ENCODE measurements at regions of chr15 and their contacts with region 1.

Region 1: DNA sequence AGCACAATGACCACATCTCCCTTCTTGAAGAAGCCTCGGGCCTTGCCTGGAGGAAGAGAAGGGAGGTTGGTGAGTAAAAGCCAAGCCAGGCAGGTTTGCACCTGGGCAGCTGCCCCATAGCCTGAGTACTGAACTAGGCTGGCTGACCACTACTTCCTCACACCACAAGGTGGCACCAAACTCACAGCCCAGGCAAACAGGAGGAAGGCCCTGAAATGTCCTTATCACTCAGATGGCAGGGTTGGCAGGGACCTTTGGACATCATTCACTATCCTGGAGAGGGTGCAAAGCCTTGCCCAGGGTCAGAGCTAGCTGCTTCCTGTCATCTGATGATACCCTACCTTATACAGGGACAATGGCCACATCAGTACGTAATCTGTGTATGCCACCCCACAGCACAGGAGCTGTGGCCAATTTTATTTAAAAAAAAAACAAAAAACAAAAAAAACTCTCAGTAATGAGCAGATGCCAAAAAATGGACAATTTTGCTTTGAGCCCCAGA is 2.2 kb upstream of the GRAMD2A start:
- DNase-seq: peak; percentile 54 to 76 (median 67)
- ATAC-seq: peak; percentile 83
- H3K4me3 ChIP-seq: no peak overlapping the region
- H3K4me3 Mint-ChIP-seq: no peak overlapping the region
- H3K27ac ChIP-seq: no peak overlapping the region
- H3K27ac Mint-ChIP-seq: peak overlapping the region in 1 of 9 donors; percentile 56
- H3K4me1 ChIP-seq: no peaks in the 10 kb centered on the region
- H3K4me1 Mint-ChIP-seq: peaks cover 4 to 31% (median 8%) of the 10 kb centered on the region in 7 donors
- H3K27me3 ChIP-seq: no peaks in the 10 kb centered on the region
- H3K27me3 Mint-ChIP-seq: peaks cover 13 to 22% (median 19%) of the 10 kb centered on the region in 5 donors

Region 2: DNA sequence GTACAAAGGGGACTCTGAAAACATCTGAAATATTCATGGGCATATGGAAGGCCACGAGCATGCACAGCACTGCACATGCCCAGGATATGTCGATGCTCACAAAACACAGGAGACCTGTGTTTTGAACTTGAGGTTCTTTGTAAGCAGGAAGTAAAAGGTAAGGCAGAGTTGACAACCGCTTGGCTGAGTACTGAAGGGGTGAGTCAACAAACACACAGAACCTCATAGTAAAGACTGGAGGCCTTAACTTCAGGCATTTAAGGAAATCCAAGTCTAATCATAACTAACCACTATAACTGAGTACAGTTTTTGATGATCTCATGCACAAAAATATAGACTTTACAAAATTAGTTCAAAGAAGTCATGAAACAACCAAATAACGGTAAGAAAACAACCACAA is 162.4 kb before region 1 on chr15:
- CTCF ChIA-PET with region 1: no interaction called
- POLR2A ChIA-PET with region 1: no interaction called
- intact Hi-C with region 1: no loop called
- DNase-seq: no peak
- ATAC-seq: no peak
- H3K4me3 ChIP-seq: no peak overlapping the region
- H3K4me3 Mint-ChIP-seq: peak overlapping the region in 1 of 10 donors; percentile 45
- H3K27ac ChIP-seq: no peak overlapping the region
- H3K27ac Mint-ChIP-seq: peak overlapping the region in 1 of 9 donors; percentile 25
- H3K4me1 ChIP-seq: no peaks in the 10 kb centered on the region
- H3K4me1 Mint-ChIP-seq: peaks cover 6 to 34% (median 22%) of the 10 kb centered on the region in 7 donors
- H3K27me3 ChIP-seq: no peaks in the 10 kb centered on the region
- H3K27me3 Mint-ChIP-seq: no peaks in the 10 kb centered on the region

Region 3: DNA sequence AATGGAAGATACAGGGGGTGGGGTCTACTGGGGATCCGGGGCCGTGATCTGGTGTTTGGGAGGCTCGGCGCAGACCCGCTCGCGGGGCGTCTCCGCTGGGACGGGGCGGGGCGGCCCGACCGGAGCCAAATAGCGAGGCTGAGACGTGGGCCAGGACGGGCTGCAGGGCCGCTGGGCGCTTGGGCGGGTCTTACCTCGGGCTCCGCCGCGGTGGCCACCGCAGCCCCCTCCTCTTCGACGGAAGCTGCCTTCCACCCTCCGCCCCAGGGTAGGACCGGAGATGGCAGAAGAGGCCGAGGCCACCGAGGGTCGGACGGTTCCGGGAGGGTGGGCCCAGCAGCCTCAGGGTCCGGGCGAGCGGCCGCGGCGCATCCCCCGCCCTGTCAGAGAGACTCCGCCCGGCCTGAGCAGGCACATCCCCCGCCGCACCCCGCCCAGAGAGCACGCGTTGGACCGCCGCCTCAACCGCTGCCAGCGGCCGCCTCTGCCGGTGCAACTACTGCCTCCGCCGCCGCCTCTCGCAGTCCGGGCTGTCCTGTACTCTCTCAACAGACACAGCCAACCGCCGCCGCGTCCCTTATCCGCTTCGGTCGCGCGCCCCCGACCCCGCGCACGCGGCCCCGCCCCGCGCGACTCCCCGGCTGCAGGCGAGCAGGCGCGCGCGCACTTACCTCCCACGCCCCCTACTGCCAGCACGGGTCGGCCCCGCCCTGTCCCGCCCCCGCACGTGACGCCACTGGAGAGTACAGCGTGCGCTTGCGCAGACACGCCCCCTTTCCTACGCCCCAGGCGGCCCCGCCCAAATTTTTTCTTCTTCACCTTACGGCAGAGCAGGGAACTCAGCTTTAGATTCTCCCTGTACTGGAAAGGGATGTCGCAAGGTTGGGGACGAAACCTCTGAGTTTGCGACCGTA is 82.0 kb before region 1 on chr15 and contains the start of gene MYO9A:
- CTCF ChIA-PET with region 1: no interaction called
- POLR2A ChIA-PET with region 1: no interaction called
- intact Hi-C with region 1: loop called in 1 of 2 experiments (anchors 10 kb)
- DNase-seq: peak; percentile 93 to 99 (median 98)
- ATAC-seq: peak; percentile 90
- H3K4me3 ChIP-seq: peak within 1 kb of the TSS; percentile 86
- H3K4me3 Mint-ChIP-seq: peak within 1 kb of the TSS; percentile 89 to 99 (median 97)
- H3K27ac ChIP-seq: peak within 1 kb of the TSS; percentile 94
- H3K27ac Mint-ChIP-seq: peak within 1 kb of the TSS; percentile 81 to 99 (median 99)
- H3K4me1 ChIP-seq: peaks cover 7 to 11% of the 10 kb centered on the region in 2 donors
- H3K4me1 Mint-ChIP-seq: peaks cover 23 to 55% (median 47%) of the 10 kb centered on the region in 7 donors
- H3K27me3 ChIP-seq: no peaks in the 10 kb centered on the region
- H3K27me3 Mint-ChIP-seq: peaks cover 0 to 23% (median 0%) of the 10 kb centered on the region in 5 donors
- total RNA-seq, gene MYO9A: 21.6 to 53.3 (median 29.7) TPM

Region 4: DNA sequence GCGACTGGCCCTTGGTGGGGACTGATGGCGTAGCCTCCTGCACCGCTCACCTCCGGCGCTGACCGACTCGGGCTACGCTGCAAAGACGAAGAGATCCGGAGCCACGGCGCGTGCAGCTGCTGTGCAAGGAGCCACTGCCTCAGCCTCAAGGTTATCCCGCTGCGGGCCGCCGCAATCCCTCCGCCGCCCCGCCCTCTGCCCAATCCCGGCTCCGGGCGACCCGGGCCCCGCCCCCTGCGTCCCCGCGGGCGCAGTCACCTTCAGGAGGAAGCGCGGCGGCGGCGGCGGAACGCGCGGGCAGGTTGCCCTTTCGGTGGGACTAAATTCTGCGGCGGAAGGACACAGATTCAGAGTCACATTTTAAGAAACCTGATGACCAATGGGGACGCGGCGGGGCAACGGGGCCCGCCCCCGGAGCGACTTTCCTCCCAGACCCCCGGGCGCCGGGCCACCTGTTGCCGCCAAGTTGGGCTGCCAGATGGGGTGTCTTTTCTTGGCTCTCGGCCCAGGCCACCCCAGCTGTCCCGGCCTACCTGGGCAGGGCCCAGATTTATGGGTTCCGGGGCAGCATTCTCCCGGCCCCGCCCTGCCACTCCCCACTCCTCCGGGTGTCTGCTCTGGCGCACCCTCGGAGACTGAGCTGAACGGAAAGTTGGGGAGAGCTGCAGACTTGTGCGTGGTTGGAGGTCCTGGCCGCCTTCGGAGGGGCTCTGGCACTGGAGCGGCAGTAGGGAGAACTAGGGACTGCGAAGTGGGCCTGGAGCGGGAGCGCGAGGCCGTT is 31.5 kb after region 1 on chr15 and contains the start of gene PKM:
- CTCF ChIA-PET with region 1: interaction called, 19 read pairs
- POLR2A ChIA-PET with region 1: interaction called, 11 read pairs
- intact Hi-C with region 1: loop called (anchors 1 kb)
- DNase-seq: peak; percentile 82 to 99 (median 88)
- ATAC-seq: peak; percentile 65
- H3K4me3 ChIP-seq: peak within 1 kb of the TSS; percentile 73
- H3K4me3 Mint-ChIP-seq: peak within 1 kb of the TSS; percentile 95 to 100 (median 99)
- H3K27ac ChIP-seq: peak within 1 kb of the TSS; percentile 73
- H3K27ac Mint-ChIP-seq: peak within 1 kb of the TSS; percentile 89 to 99 (median 95)
- H3K4me1 ChIP-seq: peaks cover 34 to 39% of the 10 kb centered on the region in 2 donors
- H3K4me1 Mint-ChIP-seq: peaks cover 40 to 55% (median 50%) of the 10 kb centered on the region in 7 donors
- H3K27me3 ChIP-seq: no peaks in the 10 kb centered on the region
- H3K27me3 Mint-ChIP-seq: peaks cover 0 to 3% (median 0%) of the 10 kb centered on the region in 5 donors
- total RNA-seq, gene PKM: 237 to 1,627 (median 329) TPM

Region 5: GRCh38 chr15:72252663-72253299 is 53.0 kb after region 1 on chr15:
- CTCF ChIA-PET with region 1: no interaction called
- POLR2A ChIA-PET with region 1: no interaction called
- intact Hi-C with region 1: loop called in 1 of 2 experiments (anchors 5 kb)
- DNase-seq: no peak
- ATAC-seq: no peak
- H3K4me3 ChIP-seq: no peak overlapping the region
- H3K4me3 Mint-ChIP-seq: no peak overlapping the region
- H3K27ac ChIP-seq: no peak overlapping the region
- H3K27ac Mint-ChIP-seq: no peak overlapping the region
- H3K4me1 ChIP-seq: no peaks in the 10 kb centered on the region
- H3K4me1 Mint-ChIP-seq: peaks cover 0 to 7% (median 0%) of the 10 kb centered on the region in 7 donors
- H3K27me3 ChIP-seq: no peaks in the 10 kb centered on the region
- H3K27me3 Mint-ChIP-seq: no peaks in the 10 kb centered on the region

Region 6: DNA sequence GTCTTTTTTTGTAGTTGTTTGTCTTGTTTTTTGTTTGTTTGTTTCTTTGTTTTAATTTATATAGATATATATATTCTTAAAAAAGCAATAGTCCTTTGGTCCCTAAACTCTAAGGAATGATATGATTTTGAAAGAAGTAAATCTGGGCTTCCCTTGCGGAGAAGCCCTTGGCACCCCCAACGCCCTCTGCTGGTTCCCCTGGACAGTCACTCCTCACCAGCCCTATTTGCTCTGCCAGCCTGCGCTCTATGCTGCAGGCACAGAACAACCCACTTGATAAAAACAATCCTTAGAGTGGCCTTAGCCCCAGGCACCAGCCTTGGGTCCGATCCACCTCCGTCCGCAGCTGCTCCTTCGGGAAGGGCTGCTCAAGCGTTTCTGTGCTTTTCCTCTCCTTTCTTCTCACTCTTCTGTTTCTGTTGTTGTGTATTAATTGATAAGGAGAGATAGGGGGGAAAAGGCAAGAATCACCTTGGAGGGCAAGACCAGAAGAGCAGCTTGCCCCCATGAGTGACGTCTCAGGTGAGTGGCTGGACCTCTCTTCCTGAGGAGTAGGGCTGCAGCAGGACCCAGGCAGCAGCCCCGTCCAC is 86.3 kb after region 1 on chr15:
- CTCF ChIA-PET with region 1: interaction called, 46 read pairs
- POLR2A ChIA-PET with region 1: no interaction called
- intact Hi-C with region 1: loop called (anchors 1 kb)
- DNase-seq: peak in 7 of 9 donors; percentile 23 to 60 (median 48)
- ATAC-seq: peak; percentile 77
- H3K4me3 ChIP-seq: no peak overlapping the region
- H3K4me3 Mint-ChIP-seq: no peak overlapping the region
- H3K27ac ChIP-seq: no peak overlapping the region
- H3K27ac Mint-ChIP-seq: no peak overlapping the region
- H3K4me1 ChIP-seq: no peaks in the 10 kb centered on the region
- H3K4me1 Mint-ChIP-seq: no peaks in the 10 kb centered on the region
- H3K27me3 ChIP-seq: no peaks in the 10 kb centered on the region
- H3K27me3 Mint-ChIP-seq: no peaks in the 10 kb centered on the region

Region 7: DNA sequence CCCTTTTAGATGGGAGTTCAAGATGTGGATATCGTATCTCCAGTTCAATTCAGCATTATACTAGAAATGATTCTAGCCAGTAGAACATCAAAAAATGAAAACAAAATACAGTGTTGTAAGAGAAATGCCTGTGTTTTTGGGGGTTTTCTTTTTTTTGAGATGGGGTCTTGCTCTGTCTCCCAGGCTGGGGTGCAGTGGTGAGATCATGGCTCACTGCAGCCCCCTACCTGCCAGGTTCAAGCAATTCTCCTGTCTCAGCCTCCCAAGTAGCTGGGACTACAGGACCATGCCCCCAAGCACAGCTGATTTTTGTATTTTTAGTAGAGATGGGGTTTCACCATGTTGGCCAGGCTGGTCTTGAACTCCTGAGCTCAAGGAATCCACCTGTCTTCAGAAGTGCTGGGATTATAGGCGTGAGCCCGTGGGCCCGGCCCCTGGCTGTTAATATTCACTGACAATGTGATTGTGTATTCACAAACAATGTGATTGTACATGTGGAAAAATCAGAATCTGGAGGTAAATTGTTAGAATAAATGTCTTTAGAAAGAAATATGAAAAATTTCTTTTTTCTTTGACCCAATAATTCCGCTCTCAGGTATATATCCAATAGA is 333.3 kb after region 1 on chr15:
- CTCF ChIA-PET with region 1: no interaction called
- POLR2A ChIA-PET with region 1: no interaction called
- intact Hi-C with region 1: loop called in 1 of 2 experiments (anchors 10 kb)
- DNase-seq: peak in 7 of 9 donors; percentile 6 to 41 (median 30)
- ATAC-seq: peak; percentile 47
- H3K4me3 ChIP-seq: no peak overlapping the region
- H3K4me3 Mint-ChIP-seq: peak overlapping the region in 1 of 10 donors; percentile 58
- H3K27ac ChIP-seq: no peak overlapping the region
- H3K27ac Mint-ChIP-seq: peak overlapping the region in 1 of 9 donors; percentile 41
- H3K4me1 ChIP-seq: peaks cover 0 to 31% of the 10 kb centered on the region in 2 donors
- H3K4me1 Mint-ChIP-seq: peaks cover 27 to 87% (median 70%) of the 10 kb centered on the region in 7 donors
- H3K27me3 ChIP-seq: no peaks in the 10 kb centered on the region
- H3K27me3 Mint-ChIP-seq: no peaks in the 10 kb centered on the region